HEK293 (cell line): ENCODE measurements at regions of chr19 and their contacts with region 1.

Region 1: DNA sequence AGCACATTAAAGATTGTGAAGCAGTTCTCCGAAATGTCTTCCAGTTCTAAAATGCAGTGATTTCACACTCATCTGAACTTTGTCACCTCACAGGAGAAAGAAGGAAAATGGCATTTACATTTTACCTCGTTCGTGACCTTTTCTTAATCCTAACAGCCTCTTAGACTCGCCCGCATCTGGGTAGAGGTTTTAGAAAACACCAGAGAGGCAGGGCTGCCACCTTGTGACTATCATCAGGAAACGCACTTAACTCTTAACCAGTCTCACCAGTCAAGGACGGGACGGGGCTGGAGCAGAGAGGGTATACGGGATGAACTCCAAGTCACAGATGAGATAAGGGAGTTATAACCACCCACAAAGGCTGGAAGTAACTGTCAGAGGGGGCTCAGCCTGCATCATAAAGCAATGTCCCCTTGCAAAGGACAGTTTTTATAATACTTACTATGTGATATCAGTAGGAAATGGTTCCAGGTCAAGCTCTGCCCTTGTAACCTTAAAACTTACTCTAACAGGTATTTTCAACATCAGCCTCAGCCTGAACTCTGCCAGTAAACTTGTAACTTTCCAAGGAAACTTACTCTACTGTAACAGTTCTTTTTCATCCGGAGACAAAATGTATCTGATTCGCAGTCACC is 8.6 kb upstream of the CEACAM6 start:
- H3K4me3 ChIP-seq: no peak overlapping the region
- H3K27ac ChIP-seq: no peak overlapping the region
- H3K4me1 ChIP-seq: peaks cover 8% of the 10 kb centered on the region; the same call in 1 of the 2 replicates
- CTCF ChIP-seq: peak; percentile 47

Region 2: DNA sequence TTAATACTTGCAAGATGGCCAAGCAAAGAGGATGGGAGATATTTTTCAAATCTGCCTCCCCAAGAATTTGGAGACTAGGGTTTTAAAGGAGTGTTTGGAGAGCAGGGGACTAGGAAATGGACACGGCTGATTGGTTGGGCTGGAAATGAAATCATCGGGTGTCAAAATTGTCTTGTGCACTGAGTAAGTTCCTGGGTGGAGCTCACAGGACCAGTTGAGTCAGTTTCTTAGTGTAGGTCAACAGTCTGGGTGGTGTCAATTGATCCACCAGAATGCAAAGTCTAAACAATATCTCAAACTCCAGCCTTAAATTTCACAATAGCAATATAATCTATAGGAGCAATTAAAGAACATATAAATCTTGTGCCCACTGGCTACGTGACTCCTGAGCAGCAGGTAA is 96.9 kb before region 1 on chr19:
- CTCF ChIA-PET with region 1: interaction called, 10 read pairs
- POLR2A ChIA-PET with region 1: no interaction called
- H3K4me3 ChIP-seq: no peak overlapping the region
- H3K27ac ChIP-seq: no peak overlapping the region
- H3K4me1 ChIP-seq: no peaks in the 10 kb centered on the region
- CTCF ChIP-seq: no peak

Region 3: DNA sequence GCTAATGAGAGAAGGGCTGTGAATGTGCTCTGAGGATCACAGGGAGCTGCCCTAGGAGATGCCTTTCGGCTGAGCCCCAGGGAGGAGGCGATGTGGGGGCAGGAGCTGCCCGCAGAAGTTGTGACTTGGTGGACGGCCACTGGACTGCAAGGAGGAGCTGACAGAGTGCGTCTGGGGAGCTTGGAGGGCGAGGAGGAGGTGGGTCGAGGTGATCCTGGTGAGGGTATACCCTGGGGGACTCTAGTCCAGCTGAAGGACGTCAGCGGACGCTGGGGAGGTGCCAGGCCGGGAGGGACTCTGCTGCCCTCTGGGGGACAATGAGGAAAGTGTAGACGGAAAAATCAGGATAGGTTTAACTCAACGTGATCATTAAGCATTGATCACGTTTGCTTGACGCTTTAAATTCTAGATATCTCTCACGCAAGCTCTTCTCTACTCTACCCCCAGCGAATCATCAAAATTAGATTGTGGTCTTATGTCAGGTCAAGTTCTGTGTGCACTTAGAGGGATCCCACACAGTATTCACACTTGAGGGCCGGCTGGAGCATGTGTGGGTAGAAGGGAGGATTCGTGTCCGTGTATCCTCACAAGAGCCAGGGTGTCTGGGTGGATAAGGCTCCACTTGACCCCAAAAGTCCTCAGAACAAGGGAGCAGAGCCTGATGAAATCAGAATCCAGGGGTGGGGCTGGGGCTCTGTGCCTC is 55.3 kb before region 1 on chr19:
- CTCF ChIA-PET with region 1: interaction called, 25 read pairs
- POLR2A ChIA-PET with region 1: no interaction called
- H3K4me3 ChIP-seq: no peak overlapping the region
- H3K27ac ChIP-seq: no peak overlapping the region
- H3K4me1 ChIP-seq: no peaks in the 10 kb centered on the region
- CTCF ChIP-seq: peak; percentile 79

Region 4: DNA sequence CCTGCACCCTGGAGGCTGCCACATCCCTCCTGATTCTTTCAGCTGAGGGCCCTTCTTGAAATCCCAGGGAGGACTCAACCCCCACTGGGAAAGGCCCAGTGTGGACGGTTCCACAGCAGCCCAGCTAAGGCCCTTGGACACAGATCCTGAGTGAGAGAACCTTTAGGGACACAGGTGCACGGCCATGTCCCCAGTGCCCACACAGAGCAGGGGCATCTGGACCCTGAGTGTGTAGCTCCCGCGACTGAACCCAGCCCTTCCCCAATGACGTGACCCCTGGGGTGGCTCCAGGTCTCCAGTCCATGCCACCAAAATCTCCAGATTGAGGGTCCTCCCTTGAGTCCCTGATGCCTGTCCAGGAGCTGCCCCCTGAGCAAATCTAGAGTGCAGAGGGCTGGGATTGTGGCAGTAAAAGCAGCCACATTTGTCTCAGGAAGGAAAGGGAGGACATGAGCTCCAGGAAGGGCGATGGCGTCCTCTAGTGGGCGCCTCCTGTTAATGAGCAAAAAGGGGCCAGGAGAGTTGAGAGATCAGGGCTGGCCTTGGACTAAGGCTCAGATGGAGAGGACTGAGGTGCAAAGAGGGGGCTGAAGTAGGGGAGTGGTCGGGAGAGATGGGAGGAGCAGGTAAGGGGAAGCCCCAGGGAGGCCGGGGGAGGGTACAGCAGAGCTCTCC is 45.2 kb before region 1 on chr19:
- CTCF ChIA-PET with region 1: interaction called, 121 read pairs
- POLR2A ChIA-PET with region 1: no interaction called
- H3K4me3 ChIP-seq: no peak overlapping the region
- H3K27ac ChIP-seq: no peak overlapping the region
- H3K4me1 ChIP-seq: peaks cover 3% of the 10 kb centered on the region; the same call in 1 of the 2 replicates
- CTCF ChIP-seq: peak; percentile 62

Region 5: GRCh38 chr19:41775360-41775695 is 28.6 kb after region 1 on chr19:
- CTCF ChIA-PET with region 1: interaction called, 149 read pairs
- POLR2A ChIA-PET with region 1: no interaction called
- H3K4me3 ChIP-seq: no peak overlapping the region
- H3K27ac ChIP-seq: no peak overlapping the region
- H3K4me1 ChIP-seq: no peaks in the 10 kb centered on the region
- CTCF ChIP-seq: no peak

Region 6: GRCh38 chr19:41785653-41786052 is 38.9 kb after region 1 on chr19:
- CTCF ChIA-PET with region 1: interaction called, 226 read pairs
- POLR2A ChIA-PET with region 1: no interaction called
- H3K4me3 ChIP-seq: no peak overlapping the region
- H3K27ac ChIP-seq: no peak overlapping the region
- H3K4me1 ChIP-seq: peaks cover 3% of the 10 kb centered on the region; the same call in 1 of the 2 replicates
- CTCF ChIP-seq: peak; percentile 70

Region 7: DNA sequence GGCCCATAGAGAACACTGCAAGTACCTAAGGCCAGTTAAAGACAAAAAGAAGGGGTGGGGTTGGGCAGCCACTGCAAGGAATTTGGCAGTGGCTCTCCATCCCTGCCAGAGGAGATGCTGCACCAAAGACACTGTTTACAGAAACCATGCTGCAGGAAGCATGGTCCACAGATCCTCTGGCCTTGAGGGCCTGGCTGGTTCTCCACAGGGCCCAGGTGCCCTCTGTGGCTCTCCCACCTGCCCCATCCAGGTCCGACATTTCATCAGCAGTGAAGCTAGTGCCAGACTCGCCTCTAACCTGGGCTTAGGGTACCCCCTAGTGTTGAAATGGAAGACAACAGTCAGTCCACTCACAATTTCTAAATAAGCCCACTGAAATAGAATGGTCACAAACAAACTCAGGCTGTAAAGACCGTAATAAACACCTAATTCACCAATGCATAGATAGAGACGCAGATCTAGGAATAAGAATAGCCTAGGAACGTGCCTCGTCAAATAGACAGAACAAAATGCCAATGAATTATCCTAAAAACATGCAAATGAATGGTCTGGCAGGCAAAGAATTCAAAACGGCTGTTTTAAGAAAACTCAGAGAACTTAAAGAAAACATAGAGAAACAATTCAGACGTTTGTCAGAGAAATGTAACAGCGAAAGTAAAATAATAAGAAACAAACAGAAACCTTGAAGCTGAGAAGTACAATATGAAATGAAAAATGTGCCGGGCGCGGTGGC is 74.5 kb after region 1 on chr19:
- CTCF ChIA-PET with region 1: interaction called, 106 read pairs
- POLR2A ChIA-PET with region 1: no interaction called
- H3K4me3 ChIP-seq: no peak overlapping the region
- H3K27ac ChIP-seq: no peak overlapping the region
- H3K4me1 ChIP-seq: no peaks in the 10 kb centered on the region
- CTCF ChIP-seq: peak; percentile 86

Region 8: GRCh38 chr19:41883821-41884733 is 137.4 kb after region 1 on chr19:
- CTCF ChIA-PET with region 1: no interaction called
- POLR2A ChIA-PET with region 1: no interaction called
- H3K4me3 ChIP-seq: peak overlapping the region; percentile 85
- H3K27ac ChIP-seq: peak overlapping the region; percentile 62; the same call in 1 of the 2 replicates
- H3K4me1 ChIP-seq: peaks cover 11% of the 10 kb centered on the region; the same call in 1 of the 2 replicates
- CTCF ChIP-seq: peak; percentile 78; the same call in 1 of the 2 replicates